ENCODE measurements at regions of chr16 and their contacts with region 1.

Region 1: DNA sequence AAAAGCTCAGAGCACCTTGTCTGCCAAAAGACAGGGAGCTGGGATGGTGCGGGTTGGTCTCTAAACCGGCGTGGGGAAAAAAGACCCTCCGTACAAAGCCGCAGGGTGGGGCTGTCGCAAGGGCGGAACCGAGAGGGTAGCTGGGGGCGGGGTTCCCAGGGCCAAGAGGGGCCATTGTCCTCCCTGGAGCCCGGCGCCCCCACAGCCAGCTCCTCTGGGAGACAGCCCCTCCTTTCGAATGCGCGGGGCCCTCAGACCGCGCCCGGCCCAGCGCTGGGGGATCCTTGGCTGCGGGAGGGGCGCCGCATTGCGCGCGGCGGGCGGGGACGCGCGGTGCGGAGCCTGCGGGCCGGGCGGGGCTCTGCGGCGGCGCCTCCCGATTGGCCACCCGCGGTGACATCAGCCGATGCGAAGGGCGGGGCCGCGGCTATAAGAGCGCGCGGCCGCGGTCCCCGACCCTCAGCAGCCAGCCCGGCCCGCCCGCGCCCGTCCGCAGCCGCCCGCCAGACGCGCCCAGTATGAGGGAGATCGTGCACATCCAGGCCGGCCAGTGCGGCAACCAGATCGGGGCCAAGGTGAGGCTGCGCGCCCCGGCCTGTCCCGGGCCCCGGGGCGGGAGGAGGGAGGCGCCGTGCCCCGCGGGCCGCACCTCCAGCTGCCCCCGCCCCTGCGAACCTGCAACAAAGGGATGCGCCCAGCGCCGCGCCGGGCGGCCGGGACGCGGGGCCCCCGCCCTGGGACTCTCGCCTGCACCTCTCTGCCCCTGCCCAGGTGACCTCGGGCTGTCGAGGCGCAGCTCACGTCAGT is at the start of gene TUBB3:
- DNase-seq: peak; percentile 72
- ATAC-seq: peak; percentile 34
- H3K4me3 Mint-ChIP-seq: peak within 1 kb of the TSS; percentile 55
- H3K27ac Mint-ChIP-seq: no peak within 1 kb of the TSS
- H3K4me1 Mint-ChIP-seq: peaks cover 43% of the 10 kb centered on the region
- H3K27me3 Mint-ChIP-seq: peaks cover 38% of the 10 kb centered on the region
- total RNA-seq, gene TUBB3: 0.40 to 0.43 TPM

Region 2: GRCh38 chr16:89828199-89828778 is 94.8 kb before region 1 on chr16 and contains the start of gene SPIRE2:
- CTCF ChIA-PET with region 1: no interaction called
- POLR2A ChIA-PET with region 1: no interaction called
- intact Hi-C with region 1: loop called (anchors 1 to 10 kb)
- DNase-seq: peak; percentile 85
- ATAC-seq: peak; percentile 89
- H3K4me3 Mint-ChIP-seq: peak within 1 kb of the TSS; percentile 52
- H3K27ac Mint-ChIP-seq: no peak within 1 kb of the TSS
- H3K4me1 Mint-ChIP-seq: no peaks in the 10 kb centered on the region
- H3K27me3 Mint-ChIP-seq: peaks cover 13% of the 10 kb centered on the region
- total RNA-seq, gene SPIRE2: 1.1 to 1.5 TPM

Region 3: GRCh38 chr16:89898201-89898967 is 24.7 kb before region 1 on chr16:
- CTCF ChIA-PET with region 1: no interaction called
- POLR2A ChIA-PET with region 1: no interaction called
- intact Hi-C with region 1: no loop called
- DNase-seq: no peak
- ATAC-seq: no peak
- H3K4me3 Mint-ChIP-seq: no peak overlapping the region
- H3K27ac Mint-ChIP-seq: no peak overlapping the region
- H3K4me1 Mint-ChIP-seq: no peaks in the 10 kb centered on the region
- H3K27me3 Mint-ChIP-seq: no peaks in the 10 kb centered on the region

Region 4: GRCh38 chr16:89945670-89946069 is 22.6 kb after region 1 on chr16:
- CTCF ChIA-PET with region 1: interaction called, 6 read pairs
- POLR2A ChIA-PET with region 1: no interaction called
- intact Hi-C with region 1: loop called in 1 of 2 experiments (anchors 1 kb)
- DNase-seq: no peak
- ATAC-seq: no peak
- H3K4me3 Mint-ChIP-seq: no peak overlapping the region
- H3K27ac Mint-ChIP-seq: no peak overlapping the region
- H3K4me1 Mint-ChIP-seq: no peaks in the 10 kb centered on the region
- H3K27me3 Mint-ChIP-seq: peaks cover 20% of the 10 kb centered on the region

Region 5: GRCh38 chr16:89972244-89973234 is 49.5 kb after region 1 on chr16:
- CTCF ChIA-PET with region 1: no interaction called
- POLR2A ChIA-PET with region 1: no interaction called
- intact Hi-C with region 1: loop called in 1 of 2 experiments (anchors 1 kb)
- DNase-seq: peak; percentile 94
- ATAC-seq: peak; percentile 94
- H3K4me3 Mint-ChIP-seq: peak overlapping the region; percentile 99
- H3K27ac Mint-ChIP-seq: peak overlapping the region; percentile 95
- H3K4me1 Mint-ChIP-seq: peaks cover 32% of the 10 kb centered on the region
- H3K27me3 Mint-ChIP-seq: no peaks in the 10 kb centered on the region

Region 6: GRCh38 chr16:90022209-90023064 is 99.3 kb after region 1 on chr16:
- CTCF ChIA-PET with region 1: no interaction called
- POLR2A ChIA-PET with region 1: no interaction called
- intact Hi-C with region 1: no loop called
- DNase-seq: peak; percentile 92
- ATAC-seq: peak; percentile 86
- H3K4me3 Mint-ChIP-seq: peak overlapping the region; percentile 66
- H3K27ac Mint-ChIP-seq: peak overlapping the region; percentile 77
- H3K4me1 Mint-ChIP-seq: peaks cover 21% of the 10 kb centered on the region
- H3K27me3 Mint-ChIP-seq: peaks cover 5% of the 10 kb centered on the region

Measured in activated CD4-positive, alpha-beta T cell treated with anti-CD3 and anti-CD28 coated beads for 36 hours (primary cell).